K562 (cell line): ENCODE measurements at regions of chr11 and their contacts with region 1.

Region 1: DNA sequence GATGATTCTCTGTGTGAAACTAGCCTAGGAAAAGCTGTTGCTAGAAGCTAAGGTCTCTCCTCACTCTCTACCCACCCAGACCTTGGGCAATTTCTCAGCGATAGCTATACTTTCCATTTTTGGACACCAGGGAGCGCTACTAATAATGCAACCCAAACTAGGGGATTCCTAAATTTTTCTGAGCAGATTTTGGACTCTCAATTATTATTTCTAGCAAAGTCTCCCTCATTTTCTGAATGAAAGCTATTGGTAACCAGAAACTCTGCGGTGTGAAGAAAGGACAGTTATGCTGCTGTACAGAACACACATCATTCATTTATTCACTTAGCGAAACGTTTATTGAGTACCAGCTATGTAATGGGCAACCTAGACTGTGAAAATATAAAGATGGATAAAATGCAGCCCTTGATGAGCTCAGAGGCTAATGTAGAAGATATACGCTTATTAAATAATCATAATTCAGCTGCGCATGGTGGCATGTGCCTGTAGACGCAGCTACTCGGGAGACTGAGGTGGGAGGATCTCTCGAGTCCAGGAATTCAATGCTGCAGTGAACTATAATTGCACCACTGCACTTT is 6.1 kb upstream of the STIM1 start:
- DNase-seq: peak in 3 of 4 experiments; percentile 42 to 76 (median 57)
- ATAC-seq: peak; percentile 80
- H3K4me3 ChIP-seq: no peak overlapping the region
- H3K27ac ChIP-seq: no peak overlapping the region
- H3K4me1 ChIP-seq: peaks cover 17 to 27% of the 10 kb centered on the region in 2 experiments
- H3K27me3 ChIP-seq: no peaks in the 10 kb centered on the region
- CTCF ChIP-seq: peak; percentile 72 to 82 (median 78)
- EP300 ChIP-seq: no peak
- POLR2A ChIP-seq: no peak
- RAD21 ChIP-seq: peak; percentile 81 to 83

Region 2: GRCh38 chr11:3959015-3959919 is 109.9 kb after region 1 on chr11:
- CTCF ChIA-PET with region 1: interaction called, 3 read pairs
- POLR2A ChIA-PET with region 1: no interaction called
- in situ Hi-C with region 1: no loop called
- intact Hi-C with region 1: loop called (anchors 2 kb)
- DNase-seq: peak; percentile 41 to 51 (median 50)
- ATAC-seq: peak; percentile 63
- H3K4me3 ChIP-seq: no peak overlapping the region
- H3K27ac ChIP-seq: no peak overlapping the region
- H3K4me1 ChIP-seq: peaks cover 10 to 47% of the 10 kb centered on the region in 2 experiments
- H3K27me3 ChIP-seq: no peaks in the 10 kb centered on the region
- CTCF ChIP-seq: peak; percentile 45 to 65 (median 60)
- EP300 ChIP-seq: no peak
- POLR2A ChIP-seq: no peak
- RAD21 ChIP-seq: peak; percentile 29 to 52; a peak in 3 of 4 replicates